Posterior vena cava (tissue), 2 donors: ENCODE measurements at regions of chr17 and their contacts with region 1.

Region 1: DNA sequence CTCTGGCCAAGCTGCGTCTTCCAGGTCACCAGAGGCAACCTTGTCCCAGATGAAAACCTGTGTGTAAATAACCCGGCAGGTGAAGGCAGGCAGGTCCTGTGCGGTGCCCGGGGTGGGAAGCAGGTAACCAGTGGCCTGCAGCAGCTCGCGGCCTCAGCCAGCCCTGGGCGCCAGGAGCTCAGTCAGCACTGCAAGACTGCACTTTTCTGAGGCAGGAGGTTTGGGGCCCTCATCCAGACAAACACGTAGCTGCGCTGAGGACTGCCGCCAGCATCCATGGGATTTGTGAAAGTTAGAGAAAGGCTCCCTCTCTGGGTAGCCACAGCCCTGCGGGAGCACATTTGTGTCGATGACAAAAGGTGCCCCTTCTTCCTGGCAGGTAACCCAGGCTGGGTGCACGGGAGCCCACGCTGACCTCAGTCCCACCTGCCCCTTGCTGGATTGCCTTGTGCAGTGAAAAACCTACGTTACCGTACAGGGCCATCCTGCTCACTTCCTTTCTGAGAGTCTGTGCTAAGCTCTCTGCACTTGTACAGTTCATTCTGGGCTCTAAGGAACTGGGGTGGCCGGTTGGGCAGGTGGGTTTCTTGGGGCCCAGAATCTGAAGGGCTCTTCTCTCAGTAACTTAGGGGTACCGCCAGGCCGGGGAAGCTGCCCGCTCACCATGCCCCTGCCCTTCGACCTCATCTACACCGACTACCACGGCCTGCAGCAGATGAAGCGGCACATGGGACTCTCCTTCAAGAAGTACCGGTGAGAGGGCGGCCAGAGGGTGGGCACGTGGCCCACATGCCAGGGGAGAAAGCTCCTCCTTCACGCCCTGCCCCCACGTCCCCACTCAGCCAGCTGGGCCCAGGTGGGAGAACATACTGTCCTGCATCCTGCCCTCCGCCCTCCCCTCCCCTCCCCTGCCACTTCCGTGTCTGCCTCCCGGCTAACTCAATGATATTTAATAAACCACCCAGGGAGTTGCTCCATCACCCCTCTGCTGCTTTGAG is 56.4 kb downstream of the MGAT5B start:
- DNase-seq: no peak

Region 2: DNA sequence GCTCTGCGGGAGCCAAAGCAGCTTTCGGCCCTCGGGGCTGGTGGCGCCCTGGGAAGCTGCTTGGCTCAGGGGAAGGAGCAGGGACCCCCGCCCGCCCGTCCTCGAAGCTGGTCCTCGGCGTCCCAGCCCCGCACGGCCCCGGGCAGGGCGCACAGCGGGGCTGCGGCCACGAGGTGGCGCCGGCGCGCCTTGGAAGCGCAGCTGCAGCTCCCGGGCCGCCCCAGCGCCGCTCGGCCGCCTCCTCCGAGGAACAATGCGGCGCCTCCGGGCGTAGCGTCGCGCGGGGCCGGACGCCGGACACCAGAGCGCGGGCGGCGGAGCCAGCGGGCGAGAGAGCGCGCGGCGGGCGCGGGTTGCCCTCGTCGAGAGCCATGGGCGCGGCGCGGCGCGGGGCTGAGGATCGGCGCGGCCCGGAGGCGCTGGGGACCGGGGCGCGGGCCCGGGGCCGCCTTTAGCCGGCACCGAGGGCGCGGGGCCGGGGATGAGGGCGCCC is 56.4 kb before region 1 on chr17 and contains the start of gene MGAT5B:
- intact Hi-C with region 1: no loop called
- DNase-seq: peak; percentile 91
- total RNA-seq, gene MGAT5B: 0.19 to 0.88 TPM

Region 3: GRCh38 chr17:76887802-76888201 is 36.8 kb before region 1 on chr17:
- intact Hi-C with region 1: no loop called
- DNase-seq: no peak

Region 4: DNA sequence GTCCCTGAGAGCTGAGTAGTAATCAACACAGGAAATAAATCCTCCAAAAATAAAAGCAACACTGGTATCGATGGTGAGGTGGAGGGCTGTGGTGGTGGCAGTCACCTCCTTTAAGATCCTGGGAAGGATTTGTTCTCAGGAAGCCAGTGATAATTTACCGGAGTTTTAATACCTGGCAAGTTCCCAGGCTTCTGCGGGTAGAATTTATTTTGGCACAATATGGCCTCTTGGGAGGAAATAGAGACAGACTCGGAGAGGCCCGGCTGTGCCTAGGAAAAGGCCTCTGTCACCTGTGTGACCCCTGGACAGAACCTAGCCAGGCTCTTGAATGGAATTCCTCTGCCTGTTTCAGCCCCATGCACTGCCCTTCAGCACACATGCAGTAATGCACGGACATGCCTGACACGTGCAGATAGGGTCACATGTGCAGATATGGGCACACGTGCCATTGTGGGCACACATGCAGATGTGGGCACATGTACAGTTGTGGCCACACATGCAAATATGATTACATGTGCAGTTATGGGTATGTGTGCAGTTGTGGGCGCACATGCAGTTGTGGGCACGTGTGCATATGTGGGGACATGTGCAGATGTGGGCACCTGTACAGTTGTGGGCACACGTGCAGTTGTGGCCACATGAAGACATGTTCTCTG is 23.0 kb before region 1 on chr17:
- intact Hi-C with region 1: no loop called
- DNase-seq: no peak

Region 5: GRCh38 chr17:76983075-76983775 is 58.6 kb after region 1 on chr17:
- intact Hi-C with region 1: loop called in 1 of 2 experiments (anchors 1 kb)
- DNase-seq: no peak

Region 6: GRCh38 chr17:77312786-77313599 is 388.3 kb after region 1 on chr17:
- intact Hi-C with region 1: loop called in 1 of 2 experiments (anchors 5 kb)
- DNase-seq: peak; percentile 94